ENCODE measurements at regions of chr14 and their contacts with region 1.

Region 1: GRCh38 chr14:89618811-89619551 is 201.9 kb upstream of the FOXN3 start:
- DNase-seq: peak; percentile 69
- H3K4me3 Mint-ChIP-seq: peak overlapping the region; percentile 95
- H3K27ac Mint-ChIP-seq: peak overlapping the region; percentile 99
- H3K4me1 Mint-ChIP-seq: peaks cover 72% of the 10 kb centered on the region
- H3K27me3 Mint-ChIP-seq: no peaks in the 10 kb centered on the region

Region 2: GRCh38 chr14:88005978-88006851 is 1612.8 kb before region 1 on chr14:
- intact Hi-C with region 1: loop called (anchors 10 kb)
- DNase-seq: peak; percentile 68
- H3K4me3 Mint-ChIP-seq: peak overlapping the region; percentile 93
- H3K27ac Mint-ChIP-seq: peak overlapping the region; percentile 94
- H3K4me1 Mint-ChIP-seq: peaks cover 70% of the 10 kb centered on the region
- H3K27me3 Mint-ChIP-seq: no peaks in the 10 kb centered on the region

Region 3: DNA sequence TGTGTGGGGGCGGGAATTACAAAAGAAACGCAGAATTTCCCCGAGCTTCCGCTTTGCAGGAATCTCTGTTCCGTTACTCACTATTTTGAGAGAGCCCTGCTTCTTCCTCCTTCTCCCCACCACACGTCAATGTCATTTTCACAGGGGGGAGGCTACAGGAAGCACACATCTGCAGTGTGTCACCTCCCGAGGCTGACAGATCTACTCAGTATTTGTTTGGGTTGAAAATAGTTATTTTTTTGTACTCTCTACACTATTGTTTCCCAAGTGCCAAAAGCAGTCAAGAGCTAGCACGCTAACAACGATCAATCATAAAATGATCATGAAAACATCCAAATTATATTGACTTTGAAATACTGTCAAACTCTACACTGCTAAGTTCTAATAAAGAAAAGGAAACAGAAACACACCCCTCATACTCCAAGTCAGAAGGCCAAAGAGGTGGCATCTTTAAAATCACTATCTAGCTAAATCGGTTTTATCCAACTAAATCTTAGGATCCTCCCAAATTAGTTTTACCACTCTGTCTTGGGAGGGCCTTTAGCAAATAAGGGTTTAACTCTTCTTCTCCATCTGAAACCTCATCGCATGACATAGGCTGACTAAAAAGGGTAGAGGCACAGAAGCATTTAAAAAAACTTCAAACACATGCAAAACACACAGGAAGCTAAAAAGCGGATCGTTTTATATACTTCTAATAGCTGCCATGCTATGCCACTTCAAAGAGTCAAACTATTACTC is 253.8 kb before region 1 on chr14:
- intact Hi-C with region 1: loop called (anchors 1 kb)
- DNase-seq: peak; percentile 40
- H3K4me3 Mint-ChIP-seq: peak overlapping the region; percentile 73
- H3K27ac Mint-ChIP-seq: peak overlapping the region; percentile 89
- H3K4me1 Mint-ChIP-seq: peaks cover 38% of the 10 kb centered on the region
- H3K27me3 Mint-ChIP-seq: no peaks in the 10 kb centered on the region

Region 4: GRCh38 chr14:89509891-89510290 is 109.1 kb before region 1 on chr14:
- intact Hi-C with region 1: loop called (anchors 1 kb)
- DNase-seq: no peak
- H3K4me3 Mint-ChIP-seq: peak overlapping the region; percentile 76
- H3K27ac Mint-ChIP-seq: peak overlapping the region; percentile 93
- H3K4me1 Mint-ChIP-seq: peaks cover 63% of the 10 kb centered on the region
- H3K27me3 Mint-ChIP-seq: no peaks in the 10 kb centered on the region

Region 5: GRCh38 chr14:89589400-89590118 is 29.4 kb before region 1 on chr14:
- intact Hi-C with region 1: no loop called
- DNase-seq: no peak
- H3K4me3 Mint-ChIP-seq: no peak overlapping the region
- H3K27ac Mint-ChIP-seq: peak overlapping the region; percentile 14
- H3K4me1 Mint-ChIP-seq: peaks cover 52% of the 10 kb centered on the region
- H3K27me3 Mint-ChIP-seq: no peaks in the 10 kb centered on the region

Region 6: GRCh38 chr14:89701211-89702043 is 82.4 kb after region 1 on chr14:
- intact Hi-C with region 1: loop called (anchors 1 kb)
- DNase-seq: peak; percentile 78
- H3K4me3 Mint-ChIP-seq: peak overlapping the region; percentile 70
- H3K27ac Mint-ChIP-seq: peak overlapping the region; percentile 84
- H3K4me1 Mint-ChIP-seq: peaks cover 51% of the 10 kb centered on the region
- H3K27me3 Mint-ChIP-seq: peaks cover 4% of the 10 kb centered on the region

Region 7: DNA sequence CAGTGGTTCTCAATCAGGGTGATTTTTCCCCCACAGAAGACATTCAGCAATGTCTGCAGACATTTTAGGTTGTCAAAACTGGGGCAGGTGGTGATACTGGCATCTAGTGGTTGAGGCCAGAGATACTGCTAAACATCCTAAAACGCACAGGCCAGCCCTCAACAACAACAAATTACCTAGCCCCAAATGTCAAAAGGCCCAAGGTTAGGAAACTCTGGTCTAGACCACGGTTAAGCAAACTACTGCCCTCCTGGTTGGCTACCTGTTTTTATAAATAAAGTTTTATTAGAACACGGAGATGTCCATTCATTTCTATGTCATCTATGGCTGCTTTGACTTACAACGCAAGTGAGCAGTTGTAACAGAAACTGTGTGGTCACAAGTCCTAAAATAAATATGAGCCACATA is 148.9 kb after region 1 on chr14:
- intact Hi-C with region 1: loop called (anchors 2 kb)
- DNase-seq: peak; percentile 46
- H3K4me3 Mint-ChIP-seq: no peak overlapping the region
- H3K27ac Mint-ChIP-seq: peak overlapping the region; percentile 35
- H3K4me1 Mint-ChIP-seq: peaks cover 15% of the 10 kb centered on the region
- H3K27me3 Mint-ChIP-seq: peaks cover 19% of the 10 kb centered on the region